ENCODE measurements at regions of chr4 and their contacts with region 1.

Region 1: GRCh38 chr4:139184129-139184528 is 7.1 kb upstream of the ELF2 start:
- DNase-seq: peak; percentile 48
- H3K4me3 ChIP-seq: no peak overlapping the region
- H3K27ac ChIP-seq: no peak overlapping the region
- H3K4me1 ChIP-seq: peaks cover 4% of the 10 kb centered on the region
- CTCF ChIP-seq: peak; percentile 77

Region 2: GRCh38 chr4:137981282-137981681 is 1202.8 kb before region 1 on chr4:
- CTCF ChIA-PET with region 1: no interaction called
- POLR2A ChIA-PET with region 1: no interaction called
- intact Hi-C with region 1: no loop called
- DNase-seq: no peak
- H3K4me3 ChIP-seq: no peak overlapping the region
- H3K27ac ChIP-seq: no peak overlapping the region
- H3K4me1 ChIP-seq: no peaks in the 10 kb centered on the region
- CTCF ChIP-seq: 0 out of 2 replicates have a peak, but pooled peaks have one; percentile 15

Region 3: GRCh38 chr4:138927072-138927471 is 257.1 kb before region 1 on chr4:
- CTCF ChIA-PET with region 1: no interaction called
- POLR2A ChIA-PET with region 1: no interaction called
- intact Hi-C with region 1: no loop called
- DNase-seq: no peak
- H3K4me3 ChIP-seq: no peak overlapping the region
- H3K27ac ChIP-seq: no peak overlapping the region
- H3K4me1 ChIP-seq: no peaks in the 10 kb centered on the region
- CTCF ChIP-seq: no peak

Region 4: GRCh38 chr4:139200506-139200905 is 16.4 kb after region 1 on chr4:
- CTCF ChIA-PET with region 1: interaction called, 3 read pairs
- POLR2A ChIA-PET with region 1: interaction called, 11 read pairs
- intact Hi-C with region 1: no loop called
- DNase-seq: no peak
- H3K4me3 ChIP-seq: no peak overlapping the region
- H3K27ac ChIP-seq: no peak overlapping the region
- H3K4me1 ChIP-seq: no peaks in the 10 kb centered on the region
- CTCF ChIP-seq: 0 out of 2 replicates have a peak, but pooled peaks have one; percentile 24

Region 5: GRCh38 chr4:139295206-139295941 is 111.2 kb after region 1 on chr4:
- CTCF ChIA-PET with region 1: interaction called, 3 read pairs
- POLR2A ChIA-PET with region 1: interaction called, 9 read pairs
- intact Hi-C with region 1: loop called (anchors 1 kb)
- DNase-seq: peak; percentile 97
- H3K4me3 ChIP-seq: peak overlapping the region; percentile 86
- H3K27ac ChIP-seq: peak overlapping the region; percentile 65
- H3K4me1 ChIP-seq: peaks cover 32% of the 10 kb centered on the region
- CTCF ChIP-seq: peak; percentile 95